ENCODE measurements at regions of chr11 and their contacts with region 1.

Region 1: DNA sequence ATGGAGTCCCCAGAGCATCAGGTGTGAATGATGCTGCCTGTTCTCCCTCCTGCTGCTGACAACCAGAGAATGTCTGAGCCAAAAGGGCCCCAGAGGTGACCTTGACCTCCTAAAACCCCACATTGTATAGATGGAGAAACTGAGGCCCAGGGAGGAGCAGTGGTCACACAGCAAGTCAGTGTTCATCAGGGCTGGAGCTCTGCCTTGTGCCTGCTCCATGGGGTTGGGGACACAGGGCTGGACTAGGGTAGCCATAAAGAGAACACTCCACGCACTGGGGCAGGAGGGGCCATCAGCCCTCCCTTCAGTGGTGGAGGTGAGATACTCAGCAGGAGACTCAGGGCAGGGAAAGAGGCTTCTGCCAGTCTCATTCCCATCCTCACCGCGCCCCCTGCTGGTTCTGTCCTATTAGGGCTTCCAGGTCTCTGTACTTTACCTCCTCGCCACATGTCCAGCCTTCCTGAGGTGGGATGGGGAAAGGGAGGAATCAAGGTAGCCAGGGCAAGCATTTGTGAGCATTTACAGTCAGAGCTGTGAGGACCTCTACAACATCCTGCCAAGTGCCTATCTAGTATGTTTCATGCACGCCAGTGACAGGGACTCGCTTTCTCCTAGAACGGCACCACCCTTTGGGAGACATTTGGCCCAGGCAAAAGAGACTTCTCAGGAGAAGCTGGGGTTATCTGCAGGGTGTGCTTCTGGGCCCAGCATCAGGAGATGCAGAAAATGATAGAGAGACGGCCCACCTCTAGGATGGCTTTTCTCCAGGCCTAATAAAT is 43.2 kb downstream of the NEU3 start:
- DNase-seq: peak; percentile 74
- CTCF ChIP-seq: peak; percentile 82

Region 2: DNA sequence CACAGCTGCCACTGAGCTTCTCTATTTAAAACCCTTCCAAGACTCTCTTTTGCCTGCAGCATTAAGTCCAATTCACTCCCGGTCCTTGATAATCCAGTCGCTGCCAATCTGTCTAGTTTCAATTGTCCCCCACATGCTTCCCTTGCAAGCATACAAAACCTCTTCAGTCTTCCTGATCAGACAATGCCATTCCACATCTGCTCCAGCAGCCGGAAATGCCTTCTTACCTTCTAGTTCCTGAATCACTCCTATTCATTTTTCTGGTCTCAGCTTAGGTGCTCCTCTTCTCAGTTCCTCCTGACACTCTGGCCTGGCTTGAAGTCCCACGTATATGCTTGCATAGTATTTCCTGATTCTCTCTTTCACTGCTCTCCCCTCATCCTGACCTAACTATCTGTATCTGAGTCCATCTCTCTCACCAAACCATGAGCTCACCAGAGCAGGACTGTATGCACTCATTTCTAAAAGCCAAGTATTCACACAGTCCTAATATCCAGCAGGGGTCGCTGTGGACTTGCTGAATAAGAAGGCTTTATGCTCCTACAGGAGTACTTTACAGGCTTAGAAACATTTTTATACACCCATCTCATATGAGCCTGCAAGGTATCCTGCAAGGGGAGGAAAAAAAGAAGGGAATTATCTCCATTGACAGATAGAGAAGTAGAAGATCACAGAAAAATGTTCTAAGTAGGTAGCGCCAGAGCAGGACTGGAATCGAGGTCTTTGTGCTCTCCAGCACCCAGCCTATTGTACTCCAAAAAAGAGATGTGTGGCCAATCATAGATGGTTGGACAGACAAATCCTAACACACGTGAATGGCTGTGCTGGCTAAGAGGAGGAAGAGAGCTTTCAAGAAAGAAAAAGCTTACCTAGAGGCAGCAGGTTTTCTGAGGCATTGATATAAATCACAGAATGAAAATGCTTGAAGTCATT is 102.3 kb before region 1 on chr11:
- CTCF ChIA-PET with region 1: interaction called, 61 read pairs
- POLR2A ChIA-PET with region 1: no interaction called
- DNase-seq: peak; percentile 54
- CTCF ChIP-seq: peak; percentile 90

Region 3: DNA sequence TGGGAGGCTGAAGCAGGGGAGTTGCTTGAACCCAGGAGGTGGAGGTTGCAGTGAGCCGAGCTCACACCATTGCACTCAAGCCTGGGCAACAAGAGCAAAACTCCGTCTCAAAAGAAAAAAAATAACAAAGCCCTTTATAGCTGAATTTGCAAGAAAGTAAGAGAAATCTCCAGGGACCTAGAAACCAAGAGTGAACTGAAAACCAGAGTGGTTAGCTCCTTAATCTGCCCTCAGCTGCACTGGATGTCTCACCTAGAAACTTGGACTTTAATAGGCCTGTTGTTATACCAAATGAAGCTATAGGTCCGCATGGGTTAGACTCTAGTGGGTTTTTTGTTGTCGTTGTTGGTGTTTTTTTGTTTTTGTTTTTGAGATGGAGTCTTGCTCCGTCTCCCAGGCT is 39.1 kb before region 1 on chr11:
- CTCF ChIA-PET with region 1: no interaction called
- POLR2A ChIA-PET with region 1: no interaction called
- DNase-seq: peak; percentile 47
- CTCF ChIP-seq: no peak

Region 4: GRCh38 chr11:75014129-75014528 is 17.8 kb before region 1 on chr11:
- CTCF ChIA-PET with region 1: interaction called, 41 read pairs
- POLR2A ChIA-PET with region 1: no interaction called
- DNase-seq: no peak
- CTCF ChIP-seq: no peak

Region 5: DNA sequence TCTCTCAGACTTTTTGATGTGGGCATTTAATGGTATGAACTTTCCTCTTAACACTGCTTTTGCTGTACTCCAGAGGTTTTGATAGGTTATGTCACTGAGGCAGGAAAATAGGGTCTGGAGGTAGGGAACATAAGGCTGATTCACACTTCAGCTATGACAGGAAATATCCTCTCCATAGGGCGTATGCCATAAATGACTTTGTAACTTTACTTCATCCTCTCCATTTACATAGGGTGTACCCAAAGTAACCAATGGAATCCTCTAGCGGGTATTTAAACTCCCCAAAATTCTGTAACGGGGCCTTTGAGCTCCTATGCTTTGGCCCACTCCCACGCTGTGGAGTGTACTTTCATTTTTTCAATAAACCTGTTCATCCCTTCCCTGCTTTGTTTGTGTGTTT is 15.2 kb after region 1 on chr11:
- CTCF ChIA-PET with region 1: interaction called, 16 read pairs
- POLR2A ChIA-PET with region 1: no interaction called
- DNase-seq: no peak
- CTCF ChIP-seq: no peak